ENCODE measurements at regions of chr5 and their contacts with region 1.

Region 1: GRCh38 chr5:178551059-178551458 is 39.1 kb downstream of the COL23A1 start:
- DNase-seq: peak; percentile 57
- H3K4me3 ChIP-seq: no peak overlapping the region
- H3K27ac ChIP-seq: no peak overlapping the region
- H3K4me1 ChIP-seq: no peaks in the 10 kb centered on the region
- H3K27me3 ChIP-seq: no peaks in the 10 kb centered on the region

Region 2: DNA sequence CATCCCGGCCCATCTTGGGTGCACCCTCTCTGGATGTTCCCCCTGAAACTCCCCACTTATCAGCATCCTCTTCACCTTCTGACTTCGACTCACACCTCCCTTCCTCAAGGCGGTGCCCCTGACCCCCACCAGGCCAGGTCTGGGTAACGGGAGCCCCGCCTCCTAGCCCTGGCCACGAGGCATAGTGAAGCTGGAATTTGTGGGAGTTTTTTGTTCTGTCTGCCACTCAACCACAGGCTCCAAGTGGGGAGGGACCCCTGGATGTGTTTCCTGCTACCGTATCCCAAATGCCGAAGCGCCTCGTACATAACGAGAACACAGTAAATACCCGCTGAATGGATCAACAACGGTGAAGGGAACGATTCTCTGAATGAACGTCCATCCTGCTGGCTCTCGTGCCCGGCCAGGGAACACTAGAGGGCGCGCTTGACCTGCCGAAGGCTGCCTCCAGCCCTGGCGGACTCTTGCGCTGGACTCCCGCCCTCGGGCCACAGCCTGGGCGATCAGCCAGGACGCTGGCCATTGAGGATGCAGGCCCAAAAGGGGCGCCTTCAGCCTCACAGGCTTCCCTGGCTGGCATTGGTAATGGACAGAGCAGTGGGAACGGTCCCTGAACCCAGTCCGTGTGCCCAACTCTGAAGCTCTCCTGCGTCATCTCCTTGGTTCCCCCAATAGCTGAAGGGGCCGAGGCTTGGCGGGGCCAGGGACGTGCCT is 271.2 kb before region 1 on chr5:
- in situ Hi-C with region 1: loop called (anchors 10 kb)
- DNase-seq: peak; percentile 86
- H3K4me3 ChIP-seq: no peak overlapping the region
- H3K27ac ChIP-seq: no peak overlapping the region
- H3K4me1 ChIP-seq: no peaks in the 10 kb centered on the region
- H3K27me3 ChIP-seq: peaks cover 4% of the 10 kb centered on the region; the same call in 1 of the 2 replicates

Region 3: DNA sequence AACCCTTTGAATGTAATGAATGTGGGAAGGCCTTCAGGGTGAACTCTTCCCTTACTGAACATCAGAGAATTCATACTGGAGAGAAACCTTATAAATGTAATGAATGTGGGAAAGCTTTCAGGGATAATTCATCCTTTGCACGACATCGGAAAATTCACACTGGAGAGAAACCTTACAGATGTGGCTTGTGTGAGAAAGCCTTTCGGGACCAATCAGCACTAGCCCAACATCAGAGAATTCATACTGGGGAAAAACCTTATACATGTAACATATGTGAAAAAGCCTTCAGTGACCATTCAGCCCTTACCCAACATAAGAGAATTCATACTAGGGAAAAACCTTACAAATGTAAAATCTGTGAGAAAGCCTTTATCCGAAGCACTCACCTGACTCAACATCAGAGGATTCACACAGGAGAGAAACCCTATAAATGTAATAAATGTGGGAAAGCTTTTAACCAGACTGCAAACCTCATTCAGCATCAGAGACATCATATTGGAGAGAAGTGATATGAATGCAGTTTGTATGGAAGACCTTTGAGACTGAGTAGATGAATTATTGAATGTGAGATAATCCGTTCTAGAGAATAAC is 414.5 kb after region 1 on chr5:
- in situ Hi-C with region 1: no loop called
- DNase-seq: no peak
- H3K4me3 ChIP-seq: no peak overlapping the region
- H3K27ac ChIP-seq: no peak overlapping the region
- H3K4me1 ChIP-seq: no peaks in the 10 kb centered on the region
- H3K27me3 ChIP-seq: no peaks in the 10 kb centered on the region

Region 4: GRCh38 chr5:179462040-179462439 is 911.0 kb after region 1 on chr5:
- in situ Hi-C with region 1: no loop called
- DNase-seq: no peak
- H3K4me3 ChIP-seq: no peak overlapping the region
- H3K27ac ChIP-seq: no peak overlapping the region
- H3K4me1 ChIP-seq: no peaks in the 10 kb centered on the region
- H3K27me3 ChIP-seq: no peaks in the 10 kb centered on the region

Measured in GM23248 (cell line).